HCT116 (cell line): ENCODE measurements at regions of chr6 and their contacts with region 1.

Region 1: GRCh38 chr6:109073344-109074132 is 21.1 kb downstream of the SESN1 start:
- DNase-seq: peak; percentile 56
- ATAC-seq: peak; percentile 72
- H3K4me3 ChIP-seq: no peak overlapping the region
- H3K27ac ChIP-seq: no peak overlapping the region
- H3K4me1 ChIP-seq: no peaks in the 10 kb centered on the region
- H3K27me3 ChIP-seq: no peaks in the 10 kb centered on the region
- CTCF ChIP-seq: peak; percentile 54 to 76 (median 71)
- POLR2A ChIP-seq: no peak
- RAD21 ChIP-seq: peak; percentile 85

Region 2: GRCh38 chr6:108105571-108105970 is 968.0 kb before region 1 on chr6:
- CTCF ChIA-PET with region 1: no interaction called
- POLR2A ChIA-PET with region 1: no interaction called
- RAD21 ChIA-PET with region 1: no interaction called
- intact Hi-C with region 1: loop called (anchors 10 kb)
- DNase-seq: no peak
- ATAC-seq: no peak
- H3K4me3 ChIP-seq: no peak overlapping the region
- H3K27ac ChIP-seq: no peak overlapping the region
- H3K4me1 ChIP-seq: peaks cover 0 to 5% of the 10 kb centered on the region in 2 experiments; a peak in 2 of 4 replicates
- H3K27me3 ChIP-seq: no peaks in the 10 kb centered on the region
- CTCF ChIP-seq: no peak
- POLR2A ChIP-seq: no peak
- RAD21 ChIP-seq: no peak

Region 3: GRCh38 chr6:108835218-108835850 is 238.2 kb before region 1 on chr6:
- CTCF ChIA-PET with region 1: interaction called, 5 read pairs
- POLR2A ChIA-PET with region 1: no interaction called
- RAD21 ChIA-PET with region 1: interaction called in 1 of 2 experiments, 3 read pairs
- intact Hi-C with region 1: loop called (anchors 1 kb)
- DNase-seq: peak; percentile 67
- ATAC-seq: peak; percentile 99
- H3K4me3 ChIP-seq: no peak overlapping the region
- H3K27ac ChIP-seq: no peak overlapping the region
- H3K4me1 ChIP-seq: no peaks in the 10 kb centered on the region
- H3K27me3 ChIP-seq: no peaks in the 10 kb centered on the region
- CTCF ChIP-seq: peak; percentile 78 to 92 (median 85)
- POLR2A ChIP-seq: no peak
- RAD21 ChIP-seq: peak; percentile 88

Region 4: GRCh38 chr6:108896111-108896661 is 177.4 kb before region 1 on chr6:
- CTCF ChIA-PET with region 1: interaction called, 20 read pairs
- POLR2A ChIA-PET with region 1: no interaction called
- RAD21 ChIA-PET with region 1: no interaction called
- intact Hi-C with region 1: loop called (anchors 1 kb)
- DNase-seq: no peak
- ATAC-seq: no peak
- H3K4me3 ChIP-seq: no peak overlapping the region
- H3K27ac ChIP-seq: no peak overlapping the region
- H3K4me1 ChIP-seq: peaks cover 6 to 16% of the 10 kb centered on the region in 2 experiments
- H3K27me3 ChIP-seq: no peaks in the 10 kb centered on the region
- CTCF ChIP-seq: no peak
- POLR2A ChIP-seq: no peak
- RAD21 ChIP-seq: no peak